ENCODE measurements at regions of chr17 and their contacts with region 1.

Region 1: GRCh38 chr17:4908301-4908700 is 5.4 kb upstream of the CHRNE start:
- DNase-seq: no peak
- ATAC-seq: no peak
- H3K4me3 ChIP-seq: no peak overlapping the region
- H3K27ac ChIP-seq: no peak overlapping the region
- H3K4me1 ChIP-seq: no peaks in the 10 kb centered on the region
- H3K27me3 ChIP-seq: no peaks in the 10 kb centered on the region

Region 2: DNA sequence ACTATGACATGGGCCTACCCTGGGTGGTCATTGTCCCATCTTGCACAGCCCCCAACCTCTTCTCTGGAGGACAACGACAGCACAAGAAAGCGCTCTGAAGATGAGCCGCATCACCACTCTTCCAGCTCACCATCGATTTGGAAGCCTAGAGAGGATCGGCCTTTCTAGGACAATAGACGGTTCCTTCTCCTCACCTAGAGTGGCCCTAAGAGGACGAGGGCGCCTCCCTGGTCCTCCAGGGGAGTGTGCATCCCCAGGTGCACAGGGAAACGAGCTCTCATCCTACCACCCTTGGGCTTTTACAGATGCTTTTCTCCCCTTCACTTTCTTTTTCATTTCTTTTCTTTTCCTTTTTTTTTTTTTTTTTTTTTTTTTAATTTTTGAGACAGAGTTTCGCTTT is 147.2 kb after region 1 on chr17:
- intact Hi-C with region 1: loop called in 1 of 2 experiments (anchors 5 kb)
- DNase-seq: no peak
- ATAC-seq: no peak
- H3K4me3 ChIP-seq: no peak overlapping the region
- H3K27ac ChIP-seq: no peak overlapping the region
- H3K4me1 ChIP-seq: no peaks in the 10 kb centered on the region
- H3K27me3 ChIP-seq: no peaks in the 10 kb centered on the region

Region 3: DNA sequence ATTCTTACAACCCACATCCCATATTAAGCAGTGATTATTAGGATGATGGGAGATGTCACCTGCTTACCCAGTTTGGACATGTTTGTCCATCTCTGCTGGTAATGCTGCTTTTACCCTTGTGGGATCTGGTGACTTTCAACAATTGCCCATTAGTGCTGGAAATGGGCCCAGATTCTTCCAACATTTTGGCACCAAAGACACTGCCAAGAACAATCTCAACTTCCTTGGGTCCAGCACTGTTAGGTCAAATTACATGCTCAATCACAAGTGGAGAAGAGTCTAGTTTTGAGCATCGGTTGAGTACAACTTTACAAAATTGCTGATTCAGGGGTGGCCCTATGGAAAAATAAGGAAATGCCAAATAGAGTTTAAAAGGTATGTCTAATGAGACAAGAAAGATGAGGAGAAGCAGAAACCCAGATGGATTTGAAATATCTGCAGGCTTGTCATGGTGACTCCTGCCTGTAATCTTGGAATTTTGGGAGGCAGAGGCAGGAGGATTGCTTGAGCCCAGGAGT is 157.0 kb after region 1 on chr17:
- intact Hi-C with region 1: loop called (anchors 2 to 5 kb)
- DNase-seq: no peak
- ATAC-seq: no peak
- H3K4me3 ChIP-seq: no peak overlapping the region
- H3K27ac ChIP-seq: no peak overlapping the region
- H3K4me1 ChIP-seq: no peaks in the 10 kb centered on the region
- H3K27me3 ChIP-seq: no peaks in the 10 kb centered on the region

Region 4: GRCh38 chr17:5111402-5112204 is 203.3 kb after region 1 on chr17 and contains the start of gene ZNF232:
- intact Hi-C with region 1: no loop called
- DNase-seq: peak; percentile 96 to 98
- ATAC-seq: peak; percentile 96
- H3K4me3 ChIP-seq: peak within 1 kb of the TSS; percentile 59 to 74
- H3K27ac ChIP-seq: peak within 1 kb of the TSS; percentile 17 to 81
- H3K4me1 ChIP-seq: no peaks in the 10 kb centered on the region
- H3K27me3 ChIP-seq: no peaks in the 10 kb centered on the region
- total RNA-seq, gene ZNF232: 7.1 to 7.8 TPM